ENCODE measurements at regions of chr11 and their contacts with region 1.

Region 1: DNA sequence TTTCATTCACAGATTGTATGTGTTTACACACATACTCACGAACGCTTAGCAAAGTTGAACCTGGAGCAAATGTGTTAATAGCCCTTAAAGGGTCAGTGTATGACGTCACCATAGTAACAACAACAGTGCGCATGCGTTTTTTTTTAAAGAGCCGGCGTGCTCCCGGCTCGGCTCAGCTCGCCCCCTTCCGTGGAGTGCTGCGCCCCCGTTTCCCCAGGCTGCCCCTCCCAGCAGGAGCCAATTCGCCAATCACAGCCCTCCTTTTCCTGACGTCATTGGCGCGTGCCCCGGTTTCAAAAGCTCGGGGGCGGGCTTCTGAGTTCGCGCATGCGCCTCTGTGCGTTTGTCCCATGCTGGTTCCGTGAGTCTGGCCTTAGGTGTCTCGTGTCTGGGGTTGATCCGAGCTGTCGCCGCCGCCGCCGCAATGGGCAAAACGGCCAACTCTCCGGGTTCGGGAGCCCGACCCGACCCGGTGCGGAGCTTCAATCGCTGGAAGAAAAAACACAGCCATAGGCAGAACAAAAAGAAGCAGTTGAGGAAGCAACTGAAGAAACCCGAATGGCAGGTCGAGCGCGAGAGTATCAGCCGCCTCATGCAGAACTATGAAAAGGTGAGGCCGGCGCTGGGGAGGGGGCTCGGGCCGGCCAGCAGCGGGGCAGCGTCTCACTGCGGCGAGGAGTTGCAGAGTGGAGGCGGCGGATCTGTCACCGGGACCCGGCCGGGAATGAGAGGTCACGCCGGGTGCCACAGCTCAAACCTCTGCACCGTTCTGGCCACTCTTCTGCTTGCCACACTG is at the start of gene DDX10:
- DNase-seq: peak; percentile 96 to 98 (median 97)
- H3K4me3 ChIP-seq: peak within 1 kb of the TSS; percentile 70 to 100 (median 92)
- H3K27ac ChIP-seq: peak within 1 kb of the TSS in 44 of 59 donors; percentile 26 to 85 (median 65)
- H3K27me3 ChIP-seq: no peaks in the 10 kb centered on the region
- CTCF ChIP-seq: peak in 53 of 56 donors; percentile 11 to 69 (median 42)
- total RNA-seq, gene DDX10: 20.8 to 50.0 (median 34.1) TPM

Region 2: DNA sequence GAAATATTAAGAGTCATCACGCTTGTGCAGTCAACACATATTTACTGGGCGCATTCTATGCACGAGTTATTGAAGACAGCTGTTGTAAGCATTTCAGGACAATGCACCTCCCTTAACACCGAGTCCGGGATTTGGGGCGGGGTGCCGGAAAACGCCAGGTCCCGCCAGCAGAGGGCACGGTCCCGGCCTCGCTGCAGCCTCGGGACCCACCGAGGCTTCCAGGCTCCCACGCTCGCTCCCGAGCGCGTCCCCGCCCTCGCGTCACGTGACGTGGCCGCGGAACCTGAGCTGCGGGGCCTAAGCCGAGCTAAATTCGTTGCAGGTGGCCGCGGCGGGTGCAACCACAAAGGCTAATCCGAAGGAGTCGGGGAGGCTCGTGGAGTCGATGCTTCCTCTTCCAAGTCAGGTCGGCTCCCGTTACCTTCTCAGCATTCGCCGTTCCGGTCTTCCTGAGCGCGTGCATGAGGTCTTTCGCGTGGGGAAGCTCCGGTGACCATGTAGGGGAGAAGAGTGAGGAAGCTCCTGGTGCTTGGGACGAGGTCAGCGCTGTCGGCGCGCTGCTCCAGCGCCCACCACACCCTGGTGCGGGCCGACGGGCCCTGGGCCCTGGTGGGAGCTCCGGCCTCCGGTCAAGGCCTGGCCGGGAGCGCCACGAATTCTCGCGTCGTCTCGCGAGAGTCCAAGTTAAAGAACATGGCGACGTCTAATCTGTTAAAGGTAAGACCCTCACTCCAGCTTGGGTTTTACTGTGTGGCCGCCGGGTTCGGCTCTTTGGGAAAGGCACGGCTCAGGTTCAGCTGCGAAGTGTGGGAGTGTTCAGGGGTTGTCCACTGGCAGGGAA is 656.1 kb before region 1 on chr11 and contains the start of gene CUL5:
- intact Hi-C with region 1: loop called (anchors 5 to 10 kb)
- DNase-seq: peak; percentile 82 to 95 (median 86)
- H3K4me3 ChIP-seq: peak within 1 kb of the TSS; percentile 62 to 100 (median 95)
- H3K27ac ChIP-seq: peak within 1 kb of the TSS; percentile 71 to 99 (median 96)
- H3K27me3 ChIP-seq: no peaks in the 10 kb centered on the region
- CTCF ChIP-seq: peak; percentile 72 to 96 (median 87)
- total RNA-seq, gene CUL5: 36.6 to 65.6 (median 52.0) TPM

Region 3: GRCh38 chr11:108121274-108122155 is 543.4 kb before region 1 on chr11 and contains the start of gene ACAT1:
- intact Hi-C with region 1: loop called in 1 of 2 experiments (anchors 5 kb)
- DNase-seq: peak; percentile 92 to 98 (median 94)
- H3K4me3 ChIP-seq: peak within 1 kb of the TSS; percentile 61 to 96 (median 86)
- H3K27ac ChIP-seq: peak within 1 kb of the TSS; percentile 43 to 97 (median 90)
- H3K27me3 ChIP-seq: no peaks in the 10 kb centered on the region
- CTCF ChIP-seq: peak in 48 of 56 donors; percentile 10 to 67 (median 46)
- total RNA-seq, gene ACAT1: 44.7 to 96.1 (median 72.4) TPM

Region 4: DNA sequence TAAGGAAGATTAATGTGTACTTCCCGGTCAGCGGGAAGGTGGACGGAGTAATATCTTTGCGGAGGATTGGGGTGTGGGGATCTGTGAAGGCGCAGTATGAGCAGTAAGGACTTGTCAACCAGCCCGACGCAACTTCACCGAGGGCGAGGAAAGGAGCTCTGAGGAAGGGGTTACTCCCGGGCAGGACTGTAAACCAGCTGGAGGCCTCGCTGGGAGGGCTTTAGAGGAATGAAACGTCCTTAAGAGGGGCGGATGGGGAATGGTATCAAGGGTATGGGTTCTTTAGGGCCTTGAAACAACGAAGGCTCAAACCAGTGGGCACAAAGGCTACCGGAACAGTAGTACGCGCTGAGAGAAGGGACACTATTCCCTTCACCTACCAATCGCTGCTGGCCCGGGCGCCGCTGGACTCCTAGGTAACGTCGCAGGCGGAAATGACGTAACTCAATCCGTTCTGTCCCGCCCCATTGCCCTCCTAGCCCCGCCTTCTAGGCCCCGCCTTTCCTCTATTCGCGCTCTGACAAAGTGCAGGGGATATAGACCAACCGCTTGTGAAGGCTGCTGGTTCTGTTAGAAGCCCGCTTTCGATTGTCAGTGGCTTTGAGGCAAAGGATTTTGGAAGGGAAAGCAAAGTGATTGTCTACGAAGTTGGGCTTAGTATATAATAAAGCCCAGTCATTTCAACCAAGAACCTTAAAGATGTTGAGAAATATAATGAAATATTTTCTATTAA is 197.7 kb before region 1 on chr11 and contains the start of gene C11orf65:
- intact Hi-C with region 1: loop called (anchors 2 to 5 kb)
- DNase-seq: peak; percentile 94 to 99 (median 96)
- H3K4me3 ChIP-seq: peak within 1 kb of the TSS; percentile 56 to 95 (median 78)
- H3K27ac ChIP-seq: peak within 1 kb of the TSS; percentile 31 to 99 (median 94)
- H3K27me3 ChIP-seq: no peaks in the 10 kb centered on the region
- CTCF ChIP-seq: peak in 12 of 56 donors; percentile 1 to 35 (median 20)
- total RNA-seq, gene C11orf65: 0.21 to 4.2 (median 1.4) TPM in 113 of 120 experiments, not detected in the others

Region 5: DNA sequence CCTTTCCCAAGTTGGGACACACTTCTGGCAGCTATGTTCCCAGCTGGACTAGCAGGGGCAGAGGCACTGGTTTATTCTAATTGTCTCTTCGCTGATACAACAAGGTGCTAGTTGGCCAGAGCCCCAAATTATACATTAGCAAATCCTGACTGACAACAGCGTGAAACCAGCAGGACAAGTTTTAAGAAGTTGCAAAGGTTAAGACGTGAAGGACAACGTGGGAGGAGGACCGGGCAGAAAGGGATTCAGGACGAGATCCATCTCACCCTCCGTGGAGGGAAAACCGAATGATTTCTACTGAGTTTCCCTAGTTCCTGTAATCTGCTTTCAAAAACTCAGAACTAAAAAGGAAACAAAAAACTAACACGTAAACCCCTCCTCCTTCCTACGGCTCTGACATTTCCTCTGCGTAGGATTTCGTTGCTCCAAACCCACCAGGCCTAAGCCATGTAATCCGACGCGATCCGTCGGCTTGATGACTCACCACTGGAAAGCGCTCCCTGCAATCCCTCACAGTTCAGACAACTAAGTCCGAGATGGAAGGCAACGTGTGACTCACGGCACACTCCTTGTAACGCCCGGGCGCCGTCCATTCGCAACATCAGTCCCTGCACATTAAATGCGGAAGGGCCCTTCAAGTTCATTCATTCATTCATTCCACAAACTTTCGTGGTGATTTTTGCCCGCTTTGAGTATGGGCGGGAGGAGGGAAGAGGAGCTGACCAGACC is 167.4 kb before region 1 on chr11:
- intact Hi-C with region 1: loop called in 1 of 2 experiments (anchors 10 kb)
- DNase-seq: peak; percentile 35 to 85 (median 60)
- H3K4me3 ChIP-seq: peak overlapping the region; percentile 56 to 83 (median 72)
- H3K27ac ChIP-seq: peak overlapping the region in 58 of 59 donors; percentile 34 to 96 (median 87)
- H3K27me3 ChIP-seq: no peaks in the 10 kb centered on the region
- CTCF ChIP-seq: peak in 3 of 56 donors; percentile 4 to 11 (median 5)

Measured in dorsolateral prefrontal cortex (tissue), 120 donors.